Heart left ventricle (tissue), 16 donors: ENCODE measurements at regions of chr4 and their contacts with region 1.

Region 1: DNA sequence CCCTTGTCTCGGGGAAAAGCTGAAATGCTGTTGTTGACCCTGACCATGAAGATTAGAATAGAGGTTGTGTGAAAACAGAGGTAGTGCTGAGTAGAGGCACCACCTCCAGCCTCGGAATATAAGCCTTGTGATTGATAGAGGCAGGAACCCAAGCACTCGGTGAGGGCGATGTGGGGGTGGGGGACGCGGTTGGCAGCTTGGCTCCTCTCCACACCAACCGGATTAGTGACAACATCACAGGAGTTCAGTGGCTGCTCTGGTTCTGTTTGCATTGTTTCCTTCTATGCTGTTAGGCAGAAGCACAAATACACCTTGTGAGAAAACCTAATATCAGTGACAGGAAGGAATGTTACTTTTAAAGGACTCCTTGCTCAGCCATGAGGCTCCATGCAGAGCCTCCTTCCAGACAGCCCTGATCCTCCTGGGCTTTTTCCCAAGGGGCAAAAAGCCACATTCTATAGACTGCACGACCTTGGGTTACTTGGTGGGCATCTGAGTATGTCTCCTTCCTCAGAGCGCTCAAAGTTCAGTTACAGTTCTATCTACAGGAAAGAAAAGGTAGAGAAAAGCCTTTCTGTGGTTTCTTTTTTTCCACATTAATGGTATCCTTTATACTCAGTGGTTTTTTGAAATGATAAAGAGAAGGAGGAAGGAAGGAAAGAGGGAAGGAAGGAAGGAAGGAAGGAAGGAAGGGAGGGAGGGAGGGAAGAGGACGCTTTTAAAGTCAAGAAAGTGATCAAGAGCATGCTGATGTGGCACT is 150.4 kb upstream of the NOCT start:
- DNase-seq: no peak
- ATAC-seq: no peak
- H3K4me3 ChIP-seq: no peak overlapping the region
- H3K27ac ChIP-seq: no peak overlapping the region
- H3K4me1 ChIP-seq: no peaks in the 10 kb centered on the region
- H3K27me3 ChIP-seq: peaks cover 0 to 10% (median 0%) of the 10 kb centered on the region in 9 donors
- CTCF ChIP-seq: no peak
- POLR2A ChIP-seq: no peak

Region 2: GRCh38 chr4:138049350-138049749 is 815.8 kb before region 1 on chr4:
- intact Hi-C with region 1: loop called in 1 of 10 experiments (anchors 10 kb)
- DNase-seq: no peak
- ATAC-seq: no peak
- H3K4me3 ChIP-seq: no peak overlapping the region
- H3K27ac ChIP-seq: no peak overlapping the region
- H3K4me1 ChIP-seq: no peaks in the 10 kb centered on the region
- H3K27me3 ChIP-seq: no peaks in the 10 kb centered on the region
- CTCF ChIP-seq: no peak
- POLR2A ChIP-seq: no peak

Region 3: DNA sequence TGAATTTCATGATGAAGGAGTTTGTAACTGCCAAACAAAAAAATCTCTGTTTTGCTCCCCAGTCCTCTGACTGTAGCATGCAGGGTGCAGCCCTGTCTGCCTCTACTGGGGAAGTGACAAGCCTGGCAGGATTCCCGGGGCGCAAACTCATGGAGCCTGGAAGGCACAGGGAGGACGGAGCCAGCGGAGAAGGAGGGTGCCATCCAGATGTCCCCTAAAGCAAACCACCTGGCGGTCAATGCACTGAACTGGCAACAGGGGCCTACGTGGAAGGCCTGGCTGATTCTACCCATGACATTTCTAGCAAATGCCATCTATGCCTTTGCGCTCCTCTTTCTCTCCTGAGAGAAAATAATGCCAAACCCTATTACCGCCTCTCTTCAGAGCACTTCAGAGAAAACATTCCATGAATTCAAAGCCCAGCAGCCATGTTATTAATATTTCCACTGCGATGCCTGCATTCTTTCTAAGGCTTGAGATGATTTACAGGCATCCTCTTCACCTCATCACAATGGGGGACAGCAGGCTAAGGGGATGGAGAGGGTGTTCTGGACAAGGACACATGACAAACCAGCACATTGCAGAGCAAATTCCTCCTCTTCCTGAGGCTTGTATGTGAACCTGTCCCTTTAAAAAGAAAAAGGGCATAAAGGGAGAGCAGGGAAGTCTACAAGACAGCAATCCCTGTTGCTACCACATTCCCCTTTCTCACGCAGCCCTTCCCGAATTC is 178.9 kb before region 1 on chr4:
- intact Hi-C with region 1: loop called (anchors 5 to 10 kb)
- DNase-seq: peak; percentile 27 to 74 (median 65)
- ATAC-seq: peak; percentile 49 to 79 (median 66)
- H3K4me3 ChIP-seq: no peak overlapping the region
- H3K27ac ChIP-seq: peak overlapping the region in 2 of 12 donors; percentile 38 to 46
- H3K4me1 ChIP-seq: peaks cover 0 to 19% (median 0%) of the 10 kb centered on the region in 12 donors
- H3K27me3 ChIP-seq: peaks cover 0 to 4% (median 0%) of the 10 kb centered on the region in 9 donors
- CTCF ChIP-seq: no peak
- POLR2A ChIP-seq: no peak